Sciatic nerve (tissue), 2 donors: ENCODE measurements at regions of chr4 and their contacts with region 1.

Region 1: DNA sequence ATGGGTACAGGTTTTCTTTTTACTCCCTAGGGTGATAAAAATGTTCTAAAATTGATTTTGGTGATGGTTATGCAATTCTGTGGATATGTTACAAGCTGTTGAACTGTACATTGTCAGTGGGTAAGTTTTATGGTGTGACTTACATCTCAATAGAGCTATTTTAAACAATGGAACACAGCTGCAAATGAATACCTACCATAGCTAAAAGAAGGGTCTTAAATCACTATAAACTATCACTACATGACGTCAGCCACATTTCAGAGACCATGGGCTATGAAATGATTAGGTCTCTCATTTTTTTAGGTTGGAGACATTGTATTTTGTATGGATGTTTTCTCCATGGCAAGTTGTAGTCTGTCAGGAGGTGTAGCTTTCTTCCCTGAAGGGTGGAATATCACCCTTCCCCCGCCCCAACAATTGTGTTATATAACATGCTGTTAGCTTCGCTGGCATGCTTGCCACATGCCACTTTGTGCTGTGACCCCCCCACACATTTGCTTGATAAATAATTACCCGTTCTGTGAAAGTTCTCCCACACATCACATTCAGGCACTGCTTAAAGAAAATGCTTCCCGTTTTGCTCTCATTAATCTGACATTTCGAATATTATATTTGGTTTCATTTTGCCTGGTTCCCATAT is 159.7 kb downstream of the ARHGAP10 start:
- DNase-seq: no peak
- ATAC-seq: no peak

Region 2: GRCh38 chr4:147400721-147401120 is 490.9 kb before region 1 on chr4:
- intact Hi-C with region 1: loop called (anchors 5 kb)
- DNase-seq: no peak
- ATAC-seq: no peak

Region 3: GRCh38 chr4:148574502-148574901 is 682.9 kb after region 1 on chr4:
- intact Hi-C with region 1: no loop called
- DNase-seq: no peak
- ATAC-seq: no peak

Region 4: DNA sequence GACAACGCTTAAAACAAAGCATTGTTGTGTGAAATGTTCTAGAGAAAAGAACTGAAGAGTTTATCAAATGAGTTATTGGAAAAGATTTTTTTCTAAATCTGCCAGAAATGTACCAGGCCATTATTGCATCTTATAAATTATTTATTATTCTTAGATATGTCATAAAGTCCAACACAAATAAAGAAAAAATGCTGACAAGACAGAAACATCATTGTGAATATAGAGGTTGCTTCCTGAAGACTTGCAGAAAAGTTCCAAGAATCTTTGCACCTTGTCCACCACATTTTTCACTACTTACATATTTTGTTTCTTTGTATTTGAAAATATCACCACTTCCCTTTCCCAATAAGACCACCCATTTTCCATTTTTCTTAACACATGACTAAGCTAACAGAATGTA is 1378.2 kb after region 1 on chr4:
- intact Hi-C with region 1: no loop called
- DNase-seq: no peak
- ATAC-seq: no peak